ENCODE measurements at regions of chr11 and their contacts with region 1.

Region 1: DNA sequence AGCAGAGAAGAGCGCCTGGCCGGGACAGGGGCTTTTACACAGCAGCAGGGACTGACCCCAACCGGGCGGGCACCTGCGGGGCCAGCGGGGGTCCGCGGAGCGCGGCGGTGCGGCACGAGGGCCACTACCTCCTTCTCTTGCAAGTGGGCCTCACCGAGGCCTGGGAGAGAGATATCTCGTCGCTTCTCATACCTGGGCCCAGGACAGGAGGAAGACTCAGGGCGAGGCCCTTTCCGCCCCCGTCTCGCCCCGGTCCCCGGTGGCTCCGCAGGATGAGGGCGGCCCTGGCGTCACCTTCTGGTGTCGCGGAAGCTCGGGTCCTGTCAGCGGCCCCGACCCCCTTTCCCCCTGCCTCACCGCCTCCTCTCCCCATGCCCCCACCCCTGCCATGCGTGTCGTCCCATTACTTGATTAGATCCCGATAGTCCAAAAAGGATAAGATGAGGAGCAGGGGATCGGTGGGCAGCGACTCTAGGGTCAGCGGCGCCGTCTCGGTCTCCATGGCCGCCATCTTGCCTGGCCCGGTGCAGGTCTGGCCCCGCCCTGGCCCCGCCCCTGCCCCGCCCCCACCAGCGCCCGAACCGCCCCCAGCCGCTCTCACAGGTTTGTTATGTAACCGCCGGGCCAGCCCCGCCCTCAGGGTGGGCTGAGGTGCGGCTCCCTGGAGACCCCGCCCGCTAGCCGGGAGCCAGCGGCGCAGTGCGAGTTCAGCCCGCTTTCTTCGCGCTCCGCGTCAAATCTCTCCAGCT is at the start of gene FBXO3:
- DNase-seq: peak; percentile 73 to 93 (median 88)
- ATAC-seq: peak; percentile 89
- H3K4me3 ChIP-seq: peak within 1 kb of the TSS; percentile 91 to 96
- H3K4me3 Mint-ChIP-seq: peak within 1 kb of the TSS; percentile 98
- H3K27ac ChIP-seq: peak within 1 kb of the TSS; percentile 71 to 80
- H3K27ac Mint-ChIP-seq: peak within 1 kb of the TSS; percentile 96
- H3K4me1 ChIP-seq: peaks cover 29% of the 10 kb centered on the region
- H3K4me1 Mint-ChIP-seq: peaks cover 49% of the 10 kb centered on the region
- H3K27me3 ChIP-seq: peaks cover 2 to 10% of the 10 kb centered on the region in 2 experiments
- H3K27me3 Mint-ChIP-seq: peaks cover 8% of the 10 kb centered on the region
- CTCF ChIP-seq: no peak
- total RNA-seq, gene FBXO3: 54.8 to 55.4 TPM

Region 2: GRCh38 chr11:33161120-33162005 is 612.8 kb before region 1 on chr11 and contains the start of gene CSTF3:
- CTCF ChIA-PET with region 1: no interaction called
- POLR2A ChIA-PET with region 1: no interaction called
- intact Hi-C with region 1: loop called (anchors 1 to 10 kb)
- DNase-seq: peak; percentile 85 to 98 (median 94)
- ATAC-seq: peak; percentile 94
- H3K4me3 ChIP-seq: peak within 1 kb of the TSS; percentile 73 to 79
- H3K4me3 Mint-ChIP-seq: peak within 1 kb of the TSS; percentile 99
- H3K27ac ChIP-seq: peak within 1 kb of the TSS; percentile 77 to 89
- H3K27ac Mint-ChIP-seq: peak within 1 kb of the TSS; percentile 96
- H3K4me1 ChIP-seq: peaks cover 35% of the 10 kb centered on the region
- H3K4me1 Mint-ChIP-seq: peaks cover 47% of the 10 kb centered on the region
- H3K27me3 ChIP-seq: no peaks in the 10 kb centered on the region
- H3K27me3 Mint-ChIP-seq: no peaks in the 10 kb centered on the region
- CTCF ChIP-seq: no peak
- total RNA-seq, gene CSTF3: 7.0 to 7.9 TPM

Region 3: GRCh38 chr11:33402066-33402465 is 372.1 kb before region 1 on chr11:
- CTCF ChIA-PET with region 1: no interaction called
- POLR2A ChIA-PET with region 1: no interaction called
- intact Hi-C with region 1: no loop called
- DNase-seq: no peak
- ATAC-seq: no peak
- H3K4me3 ChIP-seq: no peak overlapping the region
- H3K4me3 Mint-ChIP-seq: no peak overlapping the region
- H3K27ac ChIP-seq: no peak overlapping the region
- H3K27ac Mint-ChIP-seq: no peak overlapping the region
- H3K4me1 ChIP-seq: no peaks in the 10 kb centered on the region
- H3K4me1 Mint-ChIP-seq: no peaks in the 10 kb centered on the region
- H3K27me3 ChIP-seq: no peaks in the 10 kb centered on the region
- H3K27me3 Mint-ChIP-seq: peaks cover 22% of the 10 kb centered on the region
- CTCF ChIP-seq: no peak

Region 4: GRCh38 chr11:33736148-33736809 is 37.9 kb before region 1 on chr11 and contains the start of gene CD59:
- CTCF ChIA-PET with region 1: no interaction called
- POLR2A ChIA-PET with region 1: interaction called, 4 read pairs
- intact Hi-C with region 1: loop called (anchors 1 kb)
- DNase-seq: peak; percentile 70 to 92 (median 90)
- ATAC-seq: peak; percentile 86
- H3K4me3 ChIP-seq: peak within 1 kb of the TSS; percentile 82 to 93
- H3K4me3 Mint-ChIP-seq: peak within 1 kb of the TSS; percentile 91
- H3K27ac ChIP-seq: peak within 1 kb of the TSS; percentile 54 to 72
- H3K27ac Mint-ChIP-seq: peak within 1 kb of the TSS; percentile 78
- H3K4me1 ChIP-seq: peaks cover 11% of the 10 kb centered on the region
- H3K4me1 Mint-ChIP-seq: peaks cover 31% of the 10 kb centered on the region
- H3K27me3 ChIP-seq: no peaks in the 10 kb centered on the region
- H3K27me3 Mint-ChIP-seq: no peaks in the 10 kb centered on the region
- CTCF ChIP-seq: no peak
- total RNA-seq, gene CD59: 31.0 to 34.5 TPM

Region 5: DNA sequence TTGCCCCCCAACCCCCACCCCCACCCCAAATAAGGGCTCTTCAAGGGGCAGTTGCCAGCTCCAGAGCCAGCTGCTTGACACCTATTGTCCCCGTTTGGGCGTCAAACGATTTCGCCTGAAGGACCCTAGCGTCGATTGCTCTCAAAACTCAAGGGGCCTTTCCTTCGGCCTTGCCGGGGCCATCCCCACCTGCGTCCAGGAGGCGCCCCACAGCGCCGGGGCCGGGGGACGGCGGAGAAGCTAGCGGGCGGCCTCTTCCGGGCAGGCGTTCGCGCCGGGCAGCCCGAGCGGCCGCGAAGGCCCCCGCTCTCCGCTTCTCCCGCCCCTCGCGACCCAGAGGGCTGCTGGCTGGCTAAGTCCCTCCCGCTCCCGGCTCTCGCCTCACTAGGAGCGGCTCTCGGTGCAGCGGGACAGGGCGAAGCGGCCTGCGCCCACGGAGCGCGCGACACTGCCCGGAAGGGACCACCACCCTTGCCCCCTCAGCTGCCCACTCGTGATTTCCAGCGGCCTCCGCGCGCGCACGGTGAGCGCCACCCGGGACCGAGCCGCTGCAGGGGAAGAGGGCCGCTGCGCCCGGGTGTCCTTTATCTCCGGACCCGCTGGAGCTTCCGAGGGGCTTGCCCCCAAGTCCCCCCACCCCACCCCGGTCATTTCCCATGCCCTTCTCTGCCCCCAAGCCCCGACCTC is 277.3 kb after region 1 on chr11 and contains the start of gene CAPRIN1:
- CTCF ChIA-PET with region 1: no interaction called
- POLR2A ChIA-PET with region 1: no interaction called
- intact Hi-C with region 1: loop called (anchors 2 to 5 kb)
- DNase-seq: peak; percentile 71 to 93 (median 83)
- ATAC-seq: peak; percentile 70
- H3K4me3 ChIP-seq: peak within 1 kb of the TSS; percentile 79 to 85
- H3K4me3 Mint-ChIP-seq: peak within 1 kb of the TSS; percentile 98
- H3K27ac ChIP-seq: peak within 1 kb of the TSS; percentile 98 to 99
- H3K27ac Mint-ChIP-seq: peak within 1 kb of the TSS; percentile 96
- H3K4me1 ChIP-seq: peaks cover 35% of the 10 kb centered on the region
- H3K4me1 Mint-ChIP-seq: peaks cover 29% of the 10 kb centered on the region
- H3K27me3 ChIP-seq: no peaks in the 10 kb centered on the region
- H3K27me3 Mint-ChIP-seq: peaks cover 3% of the 10 kb centered on the region
- CTCF ChIP-seq: no peak
- total RNA-seq, gene CAPRIN1: 92.8 to 102 TPM

Region 6: GRCh38 chr11:34149786-34150185 is 375.6 kb after region 1 on chr11:
- CTCF ChIA-PET with region 1: no interaction called
- POLR2A ChIA-PET with region 1: no interaction called
- intact Hi-C with region 1: no loop called
- DNase-seq: peak in 2 of 9 experiments; percentile 26 to 31
- ATAC-seq: peak; percentile 52
- H3K4me3 ChIP-seq: no peak overlapping the region
- H3K4me3 Mint-ChIP-seq: no peak overlapping the region
- H3K27ac ChIP-seq: no peak overlapping the region
- H3K27ac Mint-ChIP-seq: no peak overlapping the region
- H3K4me1 ChIP-seq: no peaks in the 10 kb centered on the region
- H3K4me1 Mint-ChIP-seq: peaks cover 6% of the 10 kb centered on the region
- H3K27me3 ChIP-seq: no peaks in the 10 kb centered on the region
- H3K27me3 Mint-ChIP-seq: no peaks in the 10 kb centered on the region
- CTCF ChIP-seq: no peak

Region 7: GRCh38 chr11:34234086-34234740 is 460.1 kb after region 1 on chr11:
- CTCF ChIA-PET with region 1: no interaction called
- POLR2A ChIA-PET with region 1: no interaction called
- intact Hi-C with region 1: loop called in 1 of 2 experiments (anchors 10 kb)
- DNase-seq: peak; percentile 30 to 91 (median 74)
- ATAC-seq: peak; percentile 99
- H3K4me3 ChIP-seq: no peak overlapping the region
- H3K4me3 Mint-ChIP-seq: no peak overlapping the region
- H3K27ac ChIP-seq: no peak overlapping the region
- H3K27ac Mint-ChIP-seq: peak overlapping the region; percentile 60
- H3K4me1 ChIP-seq: peaks cover 9% of the 10 kb centered on the region
- H3K4me1 Mint-ChIP-seq: peaks cover 16% of the 10 kb centered on the region
- H3K27me3 ChIP-seq: no peaks in the 10 kb centered on the region
- H3K27me3 Mint-ChIP-seq: no peaks in the 10 kb centered on the region
- CTCF ChIP-seq: no peak

Region 8: DNA sequence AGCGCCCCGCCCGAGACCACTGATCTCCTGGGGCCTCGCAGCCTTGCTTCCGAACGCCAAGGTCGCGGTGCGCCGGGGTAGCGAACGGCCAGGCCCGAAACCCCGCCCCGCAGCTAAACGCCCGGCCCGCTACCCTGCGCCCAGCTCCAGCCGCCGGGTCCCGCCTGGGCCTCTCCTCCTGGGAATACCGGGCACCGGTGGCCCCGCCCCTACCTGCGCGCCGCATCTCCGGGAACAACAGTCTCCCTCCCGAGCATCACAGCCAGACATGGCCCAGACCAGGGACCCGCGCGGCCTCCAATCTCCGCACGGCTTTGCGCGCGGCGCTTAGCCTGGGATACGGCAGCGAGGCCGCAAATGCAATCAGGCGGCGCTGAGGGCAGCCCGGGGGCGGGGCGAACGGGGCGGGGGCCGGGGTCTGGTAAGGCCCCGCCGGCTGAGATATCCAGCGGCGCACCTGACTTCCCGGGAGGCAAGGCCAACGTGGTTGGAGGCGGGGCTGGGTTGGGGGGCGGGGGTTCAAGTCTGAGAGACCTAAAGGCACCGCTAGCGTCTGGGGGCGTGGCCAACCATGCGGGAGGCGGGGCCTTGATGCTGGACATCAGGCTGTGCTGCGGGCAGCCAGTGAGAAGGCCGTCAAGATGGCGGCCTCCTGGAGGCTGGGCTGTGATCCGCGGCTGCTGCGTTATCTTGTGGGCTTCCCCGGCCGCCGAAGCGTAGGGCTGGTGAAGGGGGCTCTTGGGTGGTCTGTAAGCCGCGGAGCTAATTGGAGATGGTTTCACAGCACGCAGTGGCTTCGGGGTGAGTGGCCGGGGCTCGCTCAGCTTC is 1142.1 kb after region 1 on chr11 and contains the starts of genes APIP and PDHX:
- CTCF ChIA-PET with region 1: no interaction called
- POLR2A ChIA-PET with region 1: no interaction called
- intact Hi-C with region 1: loop called in 1 of 2 experiments (anchors 5 kb)
- DNase-seq: peak; percentile 86 to 96 (median 94)
- ATAC-seq: peak; percentile 89
- H3K4me3 ChIP-seq: peak within 1 kb of the TSS; percentile 70 to 94
- H3K4me3 Mint-ChIP-seq: peak within 1 kb of the TSS; percentile 96
- H3K27ac ChIP-seq: peak within 1 kb of the TSS; percentile 57 to 72
- H3K27ac Mint-ChIP-seq: peak within 1 kb of the TSS; percentile 97
- H3K4me1 ChIP-seq: peaks cover 18% of the 10 kb centered on the region
- H3K4me1 Mint-ChIP-seq: peaks cover 53% of the 10 kb centered on the region
- H3K27me3 ChIP-seq: no peaks in the 10 kb centered on the region
- H3K27me3 Mint-ChIP-seq: no peaks in the 10 kb centered on the region
- CTCF ChIP-seq: no peak
- total RNA-seq, gene APIP: 5.4 to 6.4 TPM
- total RNA-seq, gene PDHX: 20.3 to 21.4 TPM

Measured in CD8-positive, alpha-beta T cell (primary cell).